ENCODE measurements at regions of chr1 and their contacts with region 1.

Region 1: GRCh38 chr1:170692866-170693575 is 29.1 kb downstream of the PRRX1 start:
- DNase-seq: no peak
- H3K4me3 Mint-ChIP-seq: no peak overlapping the region
- H3K27ac Mint-ChIP-seq: no peak overlapping the region
- H3K4me1 Mint-ChIP-seq: no peaks in the 10 kb centered on the region
- H3K27me3 Mint-ChIP-seq: peaks cover 4% of the 10 kb centered on the region

Region 2: GRCh38 chr1:170200621-170201397 is 492.2 kb before region 1 on chr1:
- intact Hi-C with region 1: no loop called
- DNase-seq: no peak
- H3K4me3 Mint-ChIP-seq: no peak overlapping the region
- H3K27ac Mint-ChIP-seq: no peak overlapping the region
- H3K4me1 Mint-ChIP-seq: no peaks in the 10 kb centered on the region
- H3K27me3 Mint-ChIP-seq: no peaks in the 10 kb centered on the region

Region 3: GRCh38 chr1:170929835-170930554 is 237.0 kb after region 1 on chr1:
- intact Hi-C with region 1: loop called (anchors 1 kb)
- DNase-seq: peak; percentile 8
- H3K4me3 Mint-ChIP-seq: no peak overlapping the region
- H3K27ac Mint-ChIP-seq: no peak overlapping the region
- H3K4me1 Mint-ChIP-seq: no peaks in the 10 kb centered on the region
- H3K27me3 Mint-ChIP-seq: peaks cover 4% of the 10 kb centered on the region